Activated CD4-positive, alpha-beta T cell treated with anti-CD3 and anti-CD28 coated beads, Interleukin-2, amount 10 ng/mL, durations not matched to agents 24 days and 14 days (primary cell): ENCODE measurements at regions of chr10 and their contacts with region 1.

Region 1: DNA sequence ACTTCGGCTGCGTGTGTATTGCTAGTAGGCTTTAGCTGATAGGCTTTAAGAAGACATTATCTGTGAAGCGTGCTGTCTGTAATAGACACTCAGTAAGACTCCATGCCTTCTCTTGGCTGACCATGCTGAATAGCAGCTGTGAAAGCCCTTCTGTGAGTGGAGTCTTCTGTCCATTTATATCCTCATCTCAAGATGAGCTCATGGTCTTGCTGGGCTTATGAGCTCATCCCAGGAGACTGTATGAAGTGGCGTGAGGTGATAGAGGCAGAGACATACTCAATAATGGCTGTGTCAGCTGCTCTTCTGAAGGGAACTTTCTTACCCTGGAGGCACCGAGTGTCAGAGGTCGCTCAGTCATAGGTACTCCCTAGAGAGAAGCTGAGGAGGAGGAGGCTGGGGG is 111.5 kb downstream of the SH2D4B start:
- DNase-seq: no peak
- H3K4me3 Mint-ChIP-seq: no peak overlapping the region
- H3K27ac Mint-ChIP-seq: no peak overlapping the region
- H3K4me1 Mint-ChIP-seq: no peaks in the 10 kb centered on the region
- H3K27me3 Mint-ChIP-seq: peaks cover 5% of the 10 kb centered on the region

Region 2: GRCh38 chr10:80681142-80681541 is 32.0 kb after region 1 on chr10:
- intact Hi-C with region 1: loop called (anchors 1 kb)
- DNase-seq: no peak
- H3K4me3 Mint-ChIP-seq: no peak overlapping the region
- H3K27ac Mint-ChIP-seq: no peak overlapping the region
- H3K4me1 Mint-ChIP-seq: no peaks in the 10 kb centered on the region
- H3K27me3 Mint-ChIP-seq: peaks cover 2% of the 10 kb centered on the region